Sigmoid colon (tissue), 7 donors: ENCODE measurements at regions of chr1 and their contacts with region 1.

Region 1: DNA sequence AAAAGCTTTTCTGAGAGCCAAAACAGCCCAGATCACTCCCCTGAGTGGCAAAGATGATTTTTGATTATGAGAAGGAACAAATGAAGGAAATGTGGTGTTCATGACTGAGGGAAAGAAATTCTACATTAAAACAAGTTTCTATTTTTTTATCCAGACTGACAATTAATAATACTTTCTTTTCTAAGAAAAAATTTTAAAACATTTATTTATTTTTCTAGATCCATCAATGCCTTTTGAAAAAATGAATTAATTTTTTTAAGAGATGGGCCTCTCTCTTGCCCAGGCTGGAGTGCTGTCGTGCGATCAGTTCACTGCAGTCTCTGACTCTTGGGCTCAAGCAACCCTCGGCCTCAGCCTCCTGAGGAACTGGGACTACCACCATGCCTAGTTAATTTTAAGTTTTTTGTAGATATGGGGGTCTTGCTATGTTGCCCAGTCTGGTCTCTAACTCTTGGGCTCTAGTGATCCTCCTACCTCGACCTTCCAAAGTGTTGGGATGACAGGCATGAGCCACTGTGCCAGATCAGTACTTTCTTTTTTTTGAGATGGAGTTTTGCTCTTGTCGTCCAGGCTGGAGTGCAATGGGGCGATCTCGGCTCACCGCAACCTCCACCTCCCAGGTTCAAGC is 11.2 kb upstream of the TXNIP start:
- DNase-seq: peak; percentile 66
- H3K4me3 ChIP-seq: peak overlapping the region in 1 of 4 donors; percentile 28
- H3K27ac ChIP-seq: peak overlapping the region; percentile 80 to 83 (median 82)
- H3K4me1 ChIP-seq: peaks cover 0 to 29% (median 22%) of the 10 kb centered on the region in 4 donors
- H3K27me3 ChIP-seq: no peaks in the 10 kb centered on the region
- CTCF ChIP-seq: peak in 1 of 4 experiments; percentile 11
- EP300 ChIP-seq: no peak
- POLR2A ChIP-seq: no peak

Region 2: DNA sequence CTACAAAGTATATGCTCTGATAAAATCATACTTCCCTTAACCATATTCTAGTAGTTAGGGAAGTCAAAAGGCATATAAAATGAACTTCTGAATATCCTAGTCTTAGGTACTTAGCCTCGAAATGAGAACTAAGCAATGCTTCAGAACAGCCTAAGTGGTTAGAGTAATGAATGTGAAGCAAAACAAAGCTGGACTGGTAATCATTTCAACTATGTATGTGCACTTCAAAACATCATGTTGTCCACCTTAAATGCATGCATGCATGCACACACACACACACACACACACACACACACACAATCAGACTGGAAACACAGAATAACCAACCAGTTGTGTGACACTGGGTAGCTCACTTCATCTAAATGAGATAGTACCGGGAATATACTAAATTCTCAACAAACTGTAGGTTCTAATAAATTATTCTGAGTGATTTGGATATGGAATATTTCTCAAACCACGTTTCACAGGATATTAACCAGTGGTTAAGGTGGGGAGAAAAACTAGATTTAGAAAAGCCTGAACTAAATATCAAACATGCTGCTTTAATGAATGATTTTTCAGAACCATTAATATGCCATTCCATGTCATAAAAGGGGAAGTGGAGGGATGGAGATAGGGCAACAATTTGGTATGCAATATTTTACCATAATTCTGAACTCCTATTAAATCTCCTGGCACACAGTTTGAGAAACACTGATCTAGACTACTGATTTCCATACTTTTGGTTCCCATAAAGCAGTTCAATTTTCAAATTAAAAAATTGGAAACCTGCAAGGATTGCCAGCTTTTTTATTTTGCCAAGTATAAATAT is 203.2 kb before region 1 on chr1:
- intact Hi-C with region 1: no loop called
- DNase-seq: no peak
- H3K4me3 ChIP-seq: no peak overlapping the region
- H3K27ac ChIP-seq: no peak overlapping the region
- H3K4me1 ChIP-seq: peaks cover 0 to 47% (median 27%) of the 10 kb centered on the region in 4 donors
- H3K27me3 ChIP-seq: no peaks in the 10 kb centered on the region
- CTCF ChIP-seq: no peak
- EP300 ChIP-seq: no peak
- POLR2A ChIP-seq: no peak

Region 3: DNA sequence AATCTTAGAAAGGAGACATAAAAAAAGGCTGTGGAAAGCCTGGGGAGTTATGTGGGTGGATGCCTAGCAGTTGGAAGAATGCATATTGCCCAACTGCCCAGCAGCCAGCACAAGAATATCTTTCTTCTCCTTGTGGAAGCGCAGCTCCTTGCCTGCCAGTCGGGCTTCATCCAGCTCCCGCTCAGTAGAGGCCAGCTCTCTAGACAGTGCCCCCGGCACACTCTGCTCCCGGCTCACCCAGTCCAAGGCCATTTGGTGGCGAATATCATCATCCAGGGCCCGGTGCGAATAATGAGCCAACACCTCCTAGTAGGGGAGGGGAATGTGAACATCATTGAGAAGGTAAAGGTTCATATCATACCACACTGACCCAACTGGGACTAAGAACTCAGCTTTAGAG is 71.4 kb before region 1 on chr1:
- intact Hi-C with region 1: no loop called
- DNase-seq: no peak
- H3K4me3 ChIP-seq: no peak overlapping the region
- H3K27ac ChIP-seq: no peak overlapping the region
- H3K4me1 ChIP-seq: no peaks in the 10 kb centered on the region
- H3K27me3 ChIP-seq: no peaks in the 10 kb centered on the region
- CTCF ChIP-seq: no peak
- EP300 ChIP-seq: no peak
- POLR2A ChIP-seq: no peak

Region 4: DNA sequence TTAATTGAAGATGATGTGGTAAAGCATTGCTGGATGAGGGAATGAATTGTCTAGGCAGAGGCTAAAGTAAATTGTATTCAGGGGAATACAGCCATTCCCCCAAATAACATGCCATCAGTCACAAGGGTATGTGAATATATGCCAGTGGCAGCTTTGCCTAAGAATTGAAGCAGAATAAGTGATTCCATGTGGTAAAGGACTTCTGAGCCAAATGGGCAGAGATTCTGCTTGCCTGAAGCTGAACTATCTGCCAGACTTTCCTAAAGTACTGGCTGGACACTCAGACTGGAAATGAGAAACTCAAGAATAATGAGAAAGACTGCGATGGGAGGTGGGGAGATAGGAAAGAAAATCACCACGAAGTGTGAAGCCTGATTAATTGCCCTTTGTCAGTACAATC is 52.2 kb before region 1 on chr1:
- intact Hi-C with region 1: no loop called
- DNase-seq: no peak
- H3K4me3 ChIP-seq: peak overlapping the region in 2 of 4 donors; percentile 73 to 74
- H3K27ac ChIP-seq: peak overlapping the region; percentile 95 to 100 (median 96)
- H3K4me1 ChIP-seq: peaks cover 0 to 84% (median 64%) of the 10 kb centered on the region in 4 donors
- H3K27me3 ChIP-seq: no peaks in the 10 kb centered on the region
- CTCF ChIP-seq: no peak
- EP300 ChIP-seq: no peak
- POLR2A ChIP-seq: no peak

Region 5: DNA sequence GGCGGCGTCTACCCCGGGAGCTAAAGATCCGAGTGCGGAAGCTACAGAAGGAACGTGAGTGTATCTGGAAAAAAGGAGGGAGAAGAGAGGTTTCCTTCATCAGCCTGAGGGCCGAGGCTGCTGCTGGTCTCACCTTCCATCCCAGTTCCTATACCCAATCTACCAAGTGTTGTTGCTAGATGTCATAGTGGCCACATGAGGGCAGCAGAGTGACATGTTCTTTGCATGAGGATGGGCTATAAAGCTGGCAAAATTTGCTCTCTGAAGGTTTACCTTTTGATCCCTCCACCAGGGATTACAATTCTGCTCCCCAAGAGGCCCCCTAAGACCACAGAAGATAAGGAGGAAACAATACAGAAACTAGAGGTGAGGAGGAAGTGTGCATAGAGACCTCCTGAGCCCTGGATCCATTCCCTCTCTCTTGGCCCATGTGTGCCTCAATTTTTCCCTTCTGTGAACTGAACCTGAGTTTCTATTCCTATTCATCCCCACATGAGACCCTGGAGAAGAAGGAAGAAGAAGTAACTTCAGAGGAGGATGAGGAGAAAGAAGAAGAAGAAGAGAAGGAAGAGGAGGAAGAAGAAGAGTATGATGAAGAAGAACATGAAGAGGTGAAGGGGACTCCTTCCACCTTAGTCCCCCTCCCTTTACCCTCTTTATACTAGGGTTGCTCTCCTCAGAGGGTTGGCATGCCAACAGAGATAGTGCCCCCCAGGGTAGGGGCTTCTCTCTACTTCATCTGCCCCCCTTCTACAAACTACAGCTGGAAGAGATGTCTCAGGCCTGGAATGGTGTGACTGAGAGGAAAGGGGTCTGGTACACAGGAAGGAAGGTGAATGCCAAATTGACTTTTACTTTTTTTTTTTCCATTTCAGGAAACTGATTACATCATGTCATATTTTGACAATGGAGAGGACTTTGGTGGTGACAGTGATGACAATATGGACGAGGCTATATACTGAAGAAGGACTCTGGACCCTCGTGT is 29.8 kb before region 1 on chr1:
- intact Hi-C with region 1: loop called (anchors 1 kb)
- DNase-seq: peak; percentile 94
- H3K4me3 ChIP-seq: peak overlapping the region in 2 of 4 donors; percentile 0 to 8
- H3K27ac ChIP-seq: peak overlapping the region; percentile 92 to 96 (median 94)
- H3K4me1 ChIP-seq: peaks cover 0 to 54% (median 54%) of the 10 kb centered on the region in 4 donors
- H3K27me3 ChIP-seq: no peaks in the 10 kb centered on the region
- CTCF ChIP-seq: peak in 3 of 4 experiments; percentile 83 to 92 (median 86)
- EP300 ChIP-seq: no peak
- POLR2A ChIP-seq: no peak

Region 6: DNA sequence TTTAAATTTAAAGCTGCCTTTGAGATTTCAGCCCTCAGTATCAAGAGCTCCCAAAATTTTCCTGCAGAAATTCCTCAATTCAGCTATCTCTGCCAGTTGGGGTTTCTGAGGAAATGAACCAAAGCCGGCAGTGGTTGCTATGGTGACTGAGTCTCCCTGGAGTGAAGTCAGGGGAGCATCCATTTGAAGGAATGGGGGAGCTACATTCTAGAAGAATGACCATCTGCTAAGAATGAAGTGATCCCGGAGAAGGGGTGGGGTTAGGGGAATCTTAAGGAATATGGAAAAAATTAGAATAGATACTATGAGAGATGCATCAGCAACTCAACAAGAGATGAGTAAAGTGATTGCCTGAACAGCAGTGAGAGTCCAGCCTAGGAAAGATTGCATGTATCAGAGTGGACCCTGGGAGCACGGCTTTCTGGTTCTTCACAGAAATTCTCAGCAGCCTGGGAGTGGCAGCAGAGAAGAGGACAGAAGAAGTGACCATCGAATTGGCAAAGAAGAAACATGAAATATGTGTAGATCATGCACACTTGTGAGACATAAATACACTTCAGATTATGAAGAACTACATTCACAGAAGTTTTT is 1329.5 kb after region 1 on chr1:
- intact Hi-C with region 1: no loop called
- DNase-seq: no peak
- H3K4me3 ChIP-seq: no peak overlapping the region
- H3K27ac ChIP-seq: no peak overlapping the region
- H3K4me1 ChIP-seq: no peaks in the 10 kb centered on the region
- H3K27me3 ChIP-seq: no peaks in the 10 kb centered on the region
- CTCF ChIP-seq: no peak
- EP300 ChIP-seq: no peak
- POLR2A ChIP-seq: no peak